ENCODE measurements at regions of chr5 and their contacts with region 1.

Region 1: DNA sequence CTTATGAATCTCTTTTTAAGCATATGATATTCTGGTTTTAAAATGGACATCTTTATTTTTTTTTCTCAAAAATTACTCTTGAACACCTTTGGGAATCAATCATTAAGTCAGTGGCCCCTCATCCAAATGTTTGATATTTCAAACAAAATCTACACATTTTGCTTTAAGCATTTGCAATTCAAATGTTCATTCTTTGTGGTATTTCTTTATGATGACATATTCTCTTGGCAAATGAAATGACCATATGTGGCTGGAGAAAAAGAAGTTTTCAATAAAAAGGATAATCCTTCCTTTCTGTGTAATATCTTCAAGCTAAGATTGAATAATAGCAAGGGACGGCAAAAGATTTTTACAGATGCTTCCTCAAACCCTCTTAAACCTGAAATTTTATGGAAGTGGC is 420.8 kb downstream of the MTRR start:
- DNase-seq: no peak
- ATAC-seq: no peak

Region 2: GRCh38 chr5:7815892-7816534 is 473.8 kb before region 1 on chr5:
- intact Hi-C with region 1: no loop called
- DNase-seq: peak; percentile 89
- ATAC-seq: peak; percentile 95

Region 3: GRCh38 chr5:8363138-8363537 is 73.4 kb after region 1 on chr5:
- intact Hi-C with region 1: loop called (anchors 2 kb)
- DNase-seq: no peak
- ATAC-seq: no peak

Region 4: DNA sequence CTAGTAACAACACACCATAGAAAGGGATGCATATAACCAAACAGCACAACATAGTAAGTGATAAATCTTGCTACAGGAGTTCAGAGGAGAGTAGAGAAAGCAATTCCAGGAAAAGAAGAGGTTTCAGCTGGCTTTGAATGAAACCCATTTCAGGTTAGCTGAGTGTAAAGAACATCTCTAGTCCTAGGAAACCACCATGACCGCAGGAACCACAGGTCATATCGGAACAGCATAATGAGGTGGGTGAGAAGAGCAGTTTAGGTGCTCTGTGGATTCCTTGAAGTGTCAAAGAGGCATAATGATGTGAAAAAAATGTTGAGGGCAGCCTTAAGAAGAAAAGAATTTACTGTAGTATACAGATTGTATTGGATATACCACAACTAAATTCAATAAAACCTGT is 86.7 kb after region 1 on chr5:
- intact Hi-C with region 1: no loop called
- DNase-seq: no peak
- ATAC-seq: no peak